Activated CD4-positive, alpha-beta memory T cell treated with anti-CD3 and anti-CD28 coated beads, Interleukin-2, amount 10 ng/mL, durations not matched to agents 7 days and 5 days (primary cell): ENCODE measurements at regions of chr2 and their contacts with region 1.

Region 1: DNA sequence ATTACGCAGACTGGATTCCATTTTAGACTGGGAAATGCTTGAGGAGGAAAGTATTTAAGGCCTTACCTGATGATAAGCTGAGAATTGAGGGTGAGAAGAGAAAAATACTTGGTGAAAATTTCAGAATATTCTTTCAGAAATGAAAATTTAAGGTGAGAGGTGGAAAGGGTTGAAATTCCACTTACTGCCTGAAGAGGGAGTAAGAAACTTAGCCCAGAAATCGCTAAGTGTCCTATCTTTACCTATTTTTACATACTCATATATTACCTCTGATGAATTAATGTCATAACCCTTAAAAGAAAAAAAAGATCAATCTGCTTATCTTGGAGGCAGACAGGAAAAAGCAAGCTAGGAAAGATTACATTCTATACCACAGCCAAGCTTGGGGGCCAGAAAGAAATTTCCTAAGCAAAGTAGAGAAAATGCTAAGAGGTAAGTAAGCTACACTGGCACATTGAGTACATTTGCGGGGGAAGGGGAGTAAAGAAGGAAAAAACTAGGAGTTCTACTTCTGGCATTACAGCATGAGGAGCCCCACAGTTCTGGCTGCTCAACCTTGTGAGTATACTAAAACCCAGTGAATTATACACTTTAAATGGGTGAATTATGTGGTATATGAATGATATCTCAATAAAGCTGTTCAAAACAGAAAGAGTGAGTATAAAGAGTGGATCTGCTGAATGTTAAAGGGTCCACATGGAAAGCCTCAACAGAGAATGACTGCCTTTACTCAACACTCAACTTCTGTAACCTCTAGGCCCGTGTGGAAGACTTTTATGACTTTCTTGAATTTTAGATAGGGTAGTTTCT is 33.8 kb downstream of the SMC6 start:
- DNase-seq: no peak
- H3K4me3 Mint-ChIP-seq: no peak overlapping the region
- H3K27ac Mint-ChIP-seq: no peak overlapping the region
- H3K4me1 Mint-ChIP-seq: no peaks in the 10 kb centered on the region
- H3K27me3 Mint-ChIP-seq: no peaks in the 10 kb centered on the region

Region 2: DNA sequence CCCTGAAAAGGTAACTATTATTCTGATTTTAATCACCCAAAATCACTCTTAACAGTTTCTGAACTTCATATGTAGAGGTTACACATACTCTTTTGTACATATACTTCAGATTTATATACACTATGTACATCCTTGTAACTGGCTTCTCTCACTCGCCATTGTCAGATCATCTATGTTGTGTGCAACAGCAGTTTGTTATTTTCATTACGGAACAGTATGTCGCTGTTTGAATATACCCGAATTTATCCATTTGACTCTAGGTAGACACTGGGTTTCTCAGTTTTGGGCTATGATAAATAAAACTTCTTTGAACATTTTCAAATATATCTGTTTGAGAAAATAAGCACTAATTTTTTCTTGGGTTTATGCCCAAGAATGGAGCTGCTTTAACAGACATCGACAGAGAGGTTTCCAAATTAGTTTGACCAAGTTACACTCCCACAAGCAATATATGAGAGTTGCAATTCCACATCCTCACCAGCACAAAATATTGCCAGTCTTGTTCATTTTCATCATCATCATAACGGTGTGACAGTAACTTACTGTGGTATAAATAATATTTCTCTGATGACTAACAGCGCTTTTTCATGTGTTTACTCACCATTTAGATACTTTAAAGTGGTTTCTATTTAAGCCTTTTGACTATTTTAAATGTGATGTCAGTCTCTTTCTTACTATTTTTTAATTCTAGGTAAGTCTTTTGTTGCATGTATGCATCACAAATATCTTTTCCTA is 47.0 kb before region 1 on chr2:
- CTCF ChIA-PET with region 1: interaction called, 15 read pairs
- POLR2A ChIA-PET with region 1: no interaction called
- DNase-seq: no peak
- H3K4me3 Mint-ChIP-seq: no peak overlapping the region
- H3K27ac Mint-ChIP-seq: peak overlapping the region; percentile 21
- H3K4me1 Mint-ChIP-seq: peaks cover 12% of the 10 kb centered on the region
- H3K27me3 Mint-ChIP-seq: no peaks in the 10 kb centered on the region

Region 3: DNA sequence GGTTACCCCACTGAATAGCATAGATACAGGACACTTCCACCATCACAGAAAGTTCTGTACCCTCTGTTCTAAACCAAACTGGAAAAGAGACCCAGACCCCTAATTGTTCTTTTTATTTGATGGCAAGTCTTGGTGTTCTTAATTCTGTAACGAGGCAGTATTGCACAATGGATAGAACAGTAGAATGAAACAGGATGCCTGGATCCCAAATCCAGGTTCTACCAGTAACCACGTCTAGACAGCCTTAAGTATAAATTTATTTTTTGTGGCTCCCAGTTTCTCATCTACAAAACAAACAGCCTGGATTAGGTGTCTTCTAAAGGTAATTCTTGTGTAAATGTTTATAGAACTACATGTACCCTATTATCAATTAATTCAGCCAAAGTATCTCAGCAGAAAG is 10.1 kb after region 1 on chr2:
- CTCF ChIA-PET with region 1: interaction called, 15 read pairs
- POLR2A ChIA-PET with region 1: no interaction called
- DNase-seq: no peak
- H3K4me3 Mint-ChIP-seq: no peak overlapping the region
- H3K27ac Mint-ChIP-seq: no peak overlapping the region
- H3K4me1 Mint-ChIP-seq: no peaks in the 10 kb centered on the region
- H3K27me3 Mint-ChIP-seq: no peaks in the 10 kb centered on the region

Region 4: DNA sequence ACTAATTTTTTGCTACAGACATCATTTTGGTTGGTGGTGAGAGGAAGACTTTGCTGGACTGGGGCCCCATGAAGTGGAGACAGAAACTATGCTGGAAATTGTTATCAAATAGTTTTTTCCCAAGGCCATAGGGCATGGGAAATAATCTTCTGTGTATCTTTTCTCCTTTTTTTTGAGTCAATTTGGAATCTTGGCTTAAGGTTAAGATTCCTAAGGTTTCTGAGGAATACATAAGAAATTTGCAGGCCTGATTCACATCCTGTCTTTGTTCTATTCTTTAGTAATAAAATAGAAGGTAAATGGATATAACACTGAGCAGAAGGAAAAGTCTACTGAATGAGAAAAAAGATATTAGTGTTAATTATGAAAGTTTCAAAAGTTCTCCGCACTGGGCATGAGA is 17.2 kb after region 1 on chr2:
- CTCF ChIA-PET with region 1: interaction called, 10 read pairs
- POLR2A ChIA-PET with region 1: no interaction called
- DNase-seq: no peak
- H3K4me3 Mint-ChIP-seq: no peak overlapping the region
- H3K27ac Mint-ChIP-seq: no peak overlapping the region
- H3K4me1 Mint-ChIP-seq: no peaks in the 10 kb centered on the region
- H3K27me3 Mint-ChIP-seq: no peaks in the 10 kb centered on the region

Region 5: GRCh38 chr2:17753803-17754663 is 34.3 kb after region 1 on chr2 and contains the starts of genes GEN1 and SMC6:
- CTCF ChIA-PET with region 1: interaction called, 6 read pairs
- POLR2A ChIA-PET with region 1: interaction called, 10 read pairs
- DNase-seq: peak; percentile 92
- H3K4me3 Mint-ChIP-seq: peak within 1 kb of the TSS; percentile 81
- H3K27ac Mint-ChIP-seq: peak within 1 kb of the TSS; percentile 95
- H3K4me1 Mint-ChIP-seq: peaks cover 55% of the 10 kb centered on the region
- H3K27me3 Mint-ChIP-seq: no peaks in the 10 kb centered on the region
- total RNA-seq, gene GEN1: 32.2 to 38.6 TPM
- total RNA-seq, gene SMC6: 36.0 to 36.5 TPM

Region 6: GRCh38 chr2:17830053-17831034 is 110.6 kb after region 1 on chr2:
- CTCF ChIA-PET with region 1: interaction called, 14 read pairs
- POLR2A ChIA-PET with region 1: no interaction called
- DNase-seq: peak; percentile 47
- H3K4me3 Mint-ChIP-seq: no peak overlapping the region
- H3K27ac Mint-ChIP-seq: no peak overlapping the region
- H3K4me1 Mint-ChIP-seq: peaks cover 4% of the 10 kb centered on the region
- H3K27me3 Mint-ChIP-seq: peaks cover 44% of the 10 kb centered on the region